Aorta (tissue), 5 donors: ENCODE measurements at regions of chr4 and their contacts with region 1.

Region 1: DNA sequence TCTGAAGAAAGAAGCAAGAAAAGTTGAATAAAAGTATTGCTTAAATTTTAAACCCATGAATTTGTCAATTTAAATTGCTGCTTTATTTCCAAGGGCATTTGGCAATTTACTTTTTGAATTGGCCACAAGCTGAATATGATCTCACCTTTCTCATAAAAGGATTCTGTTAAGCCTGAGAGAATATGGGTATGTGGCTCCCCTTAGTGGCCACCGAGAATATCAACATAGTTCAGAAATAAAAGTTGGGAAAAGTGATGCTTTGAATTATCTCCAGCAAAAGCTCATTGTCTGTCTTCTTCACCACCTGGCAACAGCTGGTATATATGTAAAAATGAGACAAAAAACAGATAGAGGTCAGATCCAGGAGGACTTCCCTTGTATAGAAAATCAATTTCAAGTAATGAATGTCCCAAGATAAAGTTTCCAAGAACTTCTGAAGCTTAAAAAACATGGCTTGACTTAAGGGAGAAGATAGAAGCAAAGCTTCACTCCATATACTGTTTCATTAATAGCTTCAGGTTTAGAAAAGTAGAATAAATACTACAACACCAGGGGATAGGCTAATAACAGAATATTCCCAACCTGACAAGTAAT is 290.7 kb upstream of the FAM241A start:
- DNase-seq: no peak
- ATAC-seq: no peak
- H3K4me3 ChIP-seq: no peak overlapping the region
- H3K27ac ChIP-seq: no peak overlapping the region
- H3K4me1 ChIP-seq: no peaks in the 10 kb centered on the region
- H3K27me3 ChIP-seq: no peaks in the 10 kb centered on the region

Region 2: GRCh38 chr4:111631215-111631999 is 223.2 kb before region 1 on chr4:
- intact Hi-C with region 1: loop called in 1 of 2 experiments (anchors 10 kb)
- DNase-seq: no peak
- ATAC-seq: no peak
- H3K4me3 ChIP-seq: no peak overlapping the region
- H3K27ac ChIP-seq: no peak overlapping the region
- H3K4me1 ChIP-seq: no peaks in the 10 kb centered on the region
- H3K27me3 ChIP-seq: no peaks in the 10 kb centered on the region

Region 3: DNA sequence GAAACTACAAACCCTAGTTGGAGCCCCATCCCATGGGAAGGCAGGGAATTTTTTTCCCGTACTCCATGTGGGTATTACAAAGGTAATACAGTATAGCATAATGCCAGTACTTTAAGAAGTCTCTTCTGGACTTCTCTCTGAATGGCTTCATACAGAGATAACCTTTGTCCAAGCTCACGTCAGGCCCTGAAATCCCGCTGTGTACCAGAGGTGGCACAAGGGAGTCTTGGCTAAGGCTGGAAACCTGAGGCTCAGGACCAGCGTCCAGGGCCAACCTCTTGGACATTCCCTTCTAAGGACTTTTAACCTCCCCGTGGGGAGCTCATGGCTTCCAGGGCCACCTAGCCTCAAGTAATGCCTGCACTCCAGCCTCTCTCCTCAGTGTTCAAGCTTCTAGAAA is 48.3 kb before region 1 on chr4:
- intact Hi-C with region 1: no loop called
- DNase-seq: no peak
- ATAC-seq: no peak
- H3K4me3 ChIP-seq: no peak overlapping the region
- H3K27ac ChIP-seq: no peak overlapping the region
- H3K4me1 ChIP-seq: no peaks in the 10 kb centered on the region
- H3K27me3 ChIP-seq: no peaks in the 10 kb centered on the region